ENCODE measurements at regions of chr1 and their contacts with region 1.

Region 1: DNA sequence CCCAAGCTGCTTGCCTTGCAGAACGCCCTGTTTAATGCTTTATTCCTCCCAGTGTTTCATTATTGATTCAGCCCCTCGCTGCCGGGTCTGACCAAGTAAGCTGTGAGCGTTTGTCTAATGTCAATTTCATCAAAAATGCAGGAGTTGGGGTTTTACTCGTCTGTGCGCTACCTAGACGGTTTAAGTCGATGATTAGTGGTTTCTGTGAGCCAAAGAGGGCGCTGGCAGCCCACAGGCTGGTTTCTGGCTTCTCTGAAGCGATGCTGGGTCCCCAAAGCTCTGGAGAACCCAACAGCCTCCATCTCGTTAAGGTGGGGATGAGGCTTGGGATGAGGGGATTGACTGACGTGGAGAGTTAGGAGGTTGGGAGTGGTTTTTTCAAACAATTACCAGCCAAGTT is 102.9 kb downstream of the SYF2 start:
- DNase-seq: no peak
- H3K4me3 ChIP-seq: no peak overlapping the region
- H3K27ac ChIP-seq: no peak overlapping the region
- H3K4me1 ChIP-seq: no peaks in the 10 kb centered on the region
- H3K27me3 ChIP-seq: peaks cover 3% of the 10 kb centered on the region
- CTCF ChIP-seq: no peak

Region 2: GRCh38 chr1:24846671-24847070 is 282.7 kb before region 1 on chr1:
- CTCF ChIA-PET with region 1: no interaction called
- dilution Hi-C with region 1: no loop called
- in situ Hi-C with region 1: no loop called
- intact Hi-C with region 1: no loop called
- DNase-seq: no peak
- H3K4me3 ChIP-seq: no peak overlapping the region
- H3K27ac ChIP-seq: no peak overlapping the region
- H3K4me1 ChIP-seq: peaks cover 11% of the 10 kb centered on the region
- H3K27me3 ChIP-seq: no peaks in the 10 kb centered on the region
- CTCF ChIP-seq: no peak

Region 3: DNA sequence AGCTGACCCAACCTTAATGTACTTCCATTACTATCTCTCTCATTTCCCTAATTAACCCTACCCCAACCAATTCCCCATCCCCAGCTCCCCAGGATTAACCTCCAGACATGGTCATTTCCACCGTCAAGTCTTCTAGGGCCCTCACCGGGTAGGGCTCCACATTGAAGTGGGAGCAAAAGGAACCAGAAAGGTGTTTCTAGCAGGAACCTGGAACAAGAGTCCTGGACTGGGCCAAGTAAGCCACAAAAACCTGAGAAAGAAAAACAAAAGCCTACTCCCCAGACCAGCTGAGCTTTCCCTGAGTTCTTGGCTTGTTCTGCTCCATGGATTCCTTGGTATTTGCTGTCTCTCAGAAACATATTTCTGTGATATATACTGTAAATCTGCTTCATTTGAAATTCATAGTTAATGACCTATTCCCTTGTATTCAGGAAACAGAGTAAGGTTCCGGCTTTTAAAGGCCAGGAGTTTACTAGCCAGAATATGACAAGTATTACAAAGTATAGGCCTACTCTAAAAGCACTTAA is 44.5 kb after region 1 on chr1:
- CTCF ChIA-PET with region 1: no interaction called
- dilution Hi-C with region 1: no loop called
- in situ Hi-C with region 1: no loop called
- intact Hi-C with region 1: loop called (anchors 1 kb)
- DNase-seq: no peak
- H3K4me3 ChIP-seq: no peak overlapping the region
- H3K27ac ChIP-seq: no peak overlapping the region
- H3K4me1 ChIP-seq: no peaks in the 10 kb centered on the region
- H3K27me3 ChIP-seq: no peaks in the 10 kb centered on the region
- CTCF ChIP-seq: no peak